ENCODE measurements at regions of chr13 and their contacts with region 1.

Region 1: GRCh38 chr13:59210543-59210942 is 953.2 kb downstream of the DIAPH3 start:
- DNase-seq: no peak
- ATAC-seq: no peak
- H3K4me3 ChIP-seq: no peak overlapping the region
- H3K27ac ChIP-seq: no peak overlapping the region
- H3K4me1 ChIP-seq: no peaks in the 10 kb centered on the region
- H3K27me3 ChIP-seq: no peaks in the 10 kb centered on the region; the same call in 1 of the 2 replicates
- CTCF ChIP-seq: no peak
- POLR2A ChIP-seq: no peak
- RAD21 ChIP-seq: no peak

Region 2: DNA sequence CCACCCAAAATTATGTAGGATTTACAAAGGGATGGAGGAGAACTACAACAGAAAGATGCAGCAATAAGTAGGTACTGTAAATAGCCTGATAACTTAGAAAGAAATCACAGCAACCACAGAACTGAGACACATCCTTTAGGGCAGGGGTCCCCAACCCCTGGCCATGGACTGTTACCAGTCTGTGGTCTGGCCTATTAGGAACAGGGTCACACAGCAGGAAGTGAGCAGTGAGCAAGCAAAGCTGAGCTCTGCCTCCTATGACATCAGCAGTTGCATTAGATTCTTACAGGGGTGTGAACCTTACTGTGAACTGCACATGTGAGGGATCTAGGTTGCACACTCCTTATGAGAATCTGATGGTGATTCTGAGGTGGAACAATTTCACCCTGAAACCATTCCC is 44.4 kb before region 1 on chr13:
- CTCF ChIA-PET with region 1: no interaction called
- POLR2A ChIA-PET with region 1: interaction called, 12 read pairs
- dilution Hi-C with region 1: no loop called
- in situ Hi-C with region 1: no loop called
- intact Hi-C with region 1: no loop called
- DNase-seq: no peak
- ATAC-seq: no peak
- H3K4me3 ChIP-seq: no peak overlapping the region
- H3K27ac ChIP-seq: no peak overlapping the region
- H3K4me1 ChIP-seq: no peaks in the 10 kb centered on the region
- H3K27me3 ChIP-seq: no peaks in the 10 kb centered on the region
- CTCF ChIP-seq: no peak
- POLR2A ChIP-seq: no peak
- RAD21 ChIP-seq: no peak

Region 3: DNA sequence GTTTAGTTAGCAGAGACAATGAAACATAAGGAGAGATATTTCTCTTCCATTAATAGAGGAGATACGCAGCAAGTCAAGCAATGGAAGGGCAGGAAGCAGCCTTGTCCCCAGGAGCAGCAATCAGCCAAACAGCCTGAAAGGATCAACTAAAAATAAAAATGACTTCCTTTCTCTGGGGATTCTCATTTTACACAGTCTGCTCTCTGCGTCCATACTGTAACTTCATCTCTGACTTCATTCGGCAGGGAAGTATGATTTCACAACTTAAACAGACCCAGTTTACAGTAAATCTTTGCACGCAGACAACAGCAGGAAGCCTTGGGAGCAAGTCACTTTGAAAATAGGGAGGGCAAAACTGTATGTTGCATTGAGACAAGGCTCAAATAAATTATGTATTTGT is 126.5 kb after region 1 on chr13:
- CTCF ChIA-PET with region 1: no interaction called
- POLR2A ChIA-PET with region 1: no interaction called
- dilution Hi-C with region 1: no loop called
- in situ Hi-C with region 1: no loop called
- intact Hi-C with region 1: no loop called
- DNase-seq: no peak
- ATAC-seq: peak; percentile 32
- H3K4me3 ChIP-seq: no peak overlapping the region
- H3K27ac ChIP-seq: no peak overlapping the region
- H3K4me1 ChIP-seq: no peaks in the 10 kb centered on the region
- H3K27me3 ChIP-seq: no peaks in the 10 kb centered on the region
- CTCF ChIP-seq: no peak
- POLR2A ChIP-seq: no peak
- RAD21 ChIP-seq: no peak

Region 4: GRCh38 chr13:60282186-60282585 is 1071.6 kb after region 1 on chr13:
- CTCF ChIA-PET with region 1: no interaction called
- POLR2A ChIA-PET with region 1: no interaction called
- dilution Hi-C with region 1: no loop called
- in situ Hi-C with region 1: no loop called
- intact Hi-C with region 1: no loop called
- DNase-seq: no peak
- ATAC-seq: no peak
- H3K4me3 ChIP-seq: no peak overlapping the region
- H3K27ac ChIP-seq: no peak overlapping the region
- H3K4me1 ChIP-seq: no peaks in the 10 kb centered on the region
- H3K27me3 ChIP-seq: peaks cover 2% of the 10 kb centered on the region; the same call in 1 of the 2 replicates
- CTCF ChIP-seq: no peak
- POLR2A ChIP-seq: no peak
- RAD21 ChIP-seq: no peak